Calu3 (cell line): ENCODE measurements at regions of chr2 and their contacts with region 1.

Region 1: DNA sequence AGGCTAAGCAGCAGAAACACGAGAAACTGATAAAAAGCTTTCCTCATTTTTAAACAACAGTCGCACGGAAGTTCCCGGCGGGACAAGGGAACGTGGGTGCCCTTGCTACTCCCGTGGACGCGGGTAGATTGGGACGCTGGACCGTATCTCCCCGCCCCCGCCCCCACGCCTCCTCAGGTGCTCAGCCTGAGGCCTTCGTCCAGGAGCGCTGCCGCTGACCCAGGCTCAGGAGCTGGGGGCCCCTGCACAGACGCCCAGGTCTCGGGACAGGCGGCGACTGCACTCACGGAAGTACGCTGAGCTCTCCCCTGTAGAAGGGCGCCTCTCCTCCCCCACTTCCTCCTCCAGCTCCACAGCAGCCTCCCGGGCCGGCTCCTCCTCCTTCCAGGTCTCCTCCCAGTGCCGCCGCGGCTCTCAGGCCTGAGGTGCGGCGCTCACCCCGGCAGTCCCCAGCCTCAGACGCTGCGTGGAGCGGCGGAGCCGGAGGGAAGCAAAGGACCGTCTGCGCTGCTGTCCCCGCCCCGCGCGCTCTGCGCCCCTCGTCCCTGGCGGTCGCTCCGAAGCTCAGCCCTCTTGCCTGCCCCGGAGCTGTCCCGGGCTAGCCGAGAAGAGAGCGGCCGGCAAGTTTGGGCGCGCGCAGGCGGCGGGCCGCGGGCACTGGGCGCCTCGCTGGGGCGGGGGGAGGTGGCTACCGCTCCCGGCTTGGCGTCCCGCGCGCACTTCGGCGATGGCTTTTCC is at the start of gene ITGAV:
- DNase-seq: peak; percentile 95
- H3K4me3 Mint-ChIP-seq: peak within 1 kb of the TSS; percentile 78
- H3K27ac Mint-ChIP-seq: peak within 1 kb of the TSS; percentile 63
- H3K4me1 Mint-ChIP-seq: peaks cover 37% of the 10 kb centered on the region
- H3K27me3 Mint-ChIP-seq: no peaks in the 10 kb centered on the region
- CTCF ChIP-seq: no peak
- total RNA-seq, gene ITGAV: 109 and 146 TPM in 2 replicates

Region 2: GRCh38 chr2:186503848-186504606 is 85.8 kb before region 1 on chr2:
- CTCF ChIA-PET with region 1: no interaction called
- intact Hi-C with region 1: loop called (anchors 2 kb)
- DNase-seq: no peak
- H3K4me3 Mint-ChIP-seq: no peak overlapping the region
- H3K27ac Mint-ChIP-seq: no peak overlapping the region
- H3K4me1 Mint-ChIP-seq: peaks cover 12% of the 10 kb centered on the region
- H3K27me3 Mint-ChIP-seq: no peaks in the 10 kb centered on the region
- CTCF ChIP-seq: peak; percentile 63

Region 3: DNA sequence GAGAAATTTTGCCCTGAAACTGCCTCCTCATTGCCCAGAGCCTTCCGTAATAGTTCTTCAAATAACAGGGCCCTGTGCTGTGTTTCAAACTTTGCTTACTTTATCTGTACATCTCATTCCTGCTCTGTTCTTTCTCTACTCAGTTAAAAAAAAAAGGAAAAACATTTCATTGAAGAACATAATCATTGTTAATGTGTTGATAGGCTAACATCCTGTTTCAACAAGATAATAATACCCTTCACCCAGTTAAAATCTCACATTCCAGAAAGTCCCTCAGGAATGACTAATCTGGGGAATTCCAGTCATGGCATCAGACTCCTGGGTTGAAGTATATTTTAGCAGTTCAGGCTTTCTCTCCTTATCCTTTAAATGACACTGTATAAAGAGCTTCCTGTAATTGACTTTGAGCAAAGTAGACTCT is 45.5 kb before region 1 on chr2:
- CTCF ChIA-PET with region 1: interaction called, 4 read pairs
- intact Hi-C with region 1: loop called (anchors 1 kb)
- DNase-seq: peak; percentile 38
- H3K4me3 Mint-ChIP-seq: peak overlapping the region; percentile 31
- H3K27ac Mint-ChIP-seq: no peak overlapping the region
- H3K4me1 Mint-ChIP-seq: peaks cover 23% of the 10 kb centered on the region
- H3K27me3 Mint-ChIP-seq: no peaks in the 10 kb centered on the region
- CTCF ChIP-seq: no peak

Region 4: DNA sequence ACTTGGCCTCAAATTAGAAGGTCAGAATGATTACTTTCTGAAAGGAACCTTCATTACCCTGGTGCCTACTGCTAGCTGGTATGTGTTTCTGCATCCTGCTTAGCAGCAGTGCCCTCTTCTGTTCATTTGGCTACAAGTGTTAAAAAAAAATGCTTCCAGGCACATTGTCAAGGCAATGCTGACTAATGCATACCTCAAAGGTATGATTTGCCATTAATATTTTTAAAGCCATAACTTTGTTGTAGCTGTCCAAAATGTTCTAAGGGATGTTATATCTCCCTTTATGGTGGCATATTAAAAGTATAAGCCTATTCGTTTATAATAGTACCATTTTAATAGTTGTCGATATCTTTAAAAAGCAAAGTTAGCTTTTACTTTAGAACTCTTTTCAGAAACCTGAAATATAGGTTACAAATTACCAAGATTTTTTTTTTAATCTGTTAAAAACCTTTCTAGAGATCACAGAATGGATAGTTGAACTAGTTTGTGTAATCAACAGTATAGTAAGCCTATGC is 52.1 kb after region 1 on chr2:
- CTCF ChIA-PET with region 1: interaction called, 3 read pairs
- intact Hi-C with region 1: loop called (anchors 5 kb)
- DNase-seq: peak; percentile 51
- H3K4me3 Mint-ChIP-seq: no peak overlapping the region
- H3K27ac Mint-ChIP-seq: no peak overlapping the region
- H3K4me1 Mint-ChIP-seq: no peaks in the 10 kb centered on the region
- H3K27me3 Mint-ChIP-seq: no peaks in the 10 kb centered on the region
- CTCF ChIP-seq: peak; percentile 37